Right ventricle myocardium inferior (tissue), 1 donor: ENCODE measurements at regions of chr19 and their contacts with region 1.

Region 1: GRCh38 chr19:52492597-52493470 is 34.6 kb upstream of the ZNF808 start:
- DNase-seq: no peak
- ATAC-seq: peak; percentile 81

Region 2: GRCh38 chr19:52516191-52516590 is 23.4 kb after region 1 on chr19:
- intact Hi-C with region 1: no loop called
- DNase-seq: no peak
- ATAC-seq: no peak

Region 3: GRCh38 chr19:52535771-52536447 is 43.1 kb after region 1 on chr19:
- intact Hi-C with region 1: loop called (anchors 2 kb)
- DNase-seq: peak; percentile 97
- ATAC-seq: peak; percentile 98